Sigmoid colon (tissue), 7 donors: ENCODE measurements at regions of chr1 and their contacts with region 1.

Region 1: GRCh38 chr1:177780096-177780700 is 189.7 kb downstream of the SEC16B start:
- DNase-seq: no peak
- H3K4me3 ChIP-seq: no peak overlapping the region
- H3K27ac ChIP-seq: no peak overlapping the region
- H3K4me1 ChIP-seq: peaks cover 0 to 5% (median 0%) of the 10 kb centered on the region in 4 donors
- H3K27me3 ChIP-seq: no peaks in the 10 kb centered on the region
- CTCF ChIP-seq: peak in 3 of 4 experiments; percentile 30 to 47 (median 41)
- EP300 ChIP-seq: no peak
- POLR2A ChIP-seq: no peak

Region 2: DNA sequence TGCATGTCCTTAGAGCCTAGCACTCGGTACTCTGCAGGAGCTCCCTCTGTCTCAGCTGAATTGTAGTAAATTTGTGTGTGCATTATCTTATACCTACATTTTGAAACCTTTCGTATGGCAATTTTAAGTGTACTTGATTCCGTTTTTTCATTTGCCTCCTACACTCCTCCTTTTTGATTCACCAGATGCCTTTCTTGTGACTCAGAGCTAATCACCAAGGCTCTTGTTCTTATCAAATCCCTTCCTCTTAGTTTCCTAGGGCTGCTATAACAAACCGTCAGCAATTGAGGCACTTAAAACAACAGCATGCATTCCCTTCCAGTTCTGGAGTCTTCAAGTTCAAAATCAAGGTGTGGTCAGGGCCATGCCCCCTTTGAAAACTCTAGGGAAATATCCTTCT is 876.7 kb before region 1 on chr1:
- intact Hi-C with region 1: loop called (anchors 5 kb)
- DNase-seq: no peak
- H3K4me3 ChIP-seq: no peak overlapping the region
- H3K27ac ChIP-seq: no peak overlapping the region
- H3K4me1 ChIP-seq: no peaks in the 10 kb centered on the region
- H3K27me3 ChIP-seq: peaks cover 0 to 24% (median 0%) of the 10 kb centered on the region in 3 donors
- CTCF ChIP-seq: no peak
- EP300 ChIP-seq: no peak
- POLR2A ChIP-seq: no peak

Region 3: DNA sequence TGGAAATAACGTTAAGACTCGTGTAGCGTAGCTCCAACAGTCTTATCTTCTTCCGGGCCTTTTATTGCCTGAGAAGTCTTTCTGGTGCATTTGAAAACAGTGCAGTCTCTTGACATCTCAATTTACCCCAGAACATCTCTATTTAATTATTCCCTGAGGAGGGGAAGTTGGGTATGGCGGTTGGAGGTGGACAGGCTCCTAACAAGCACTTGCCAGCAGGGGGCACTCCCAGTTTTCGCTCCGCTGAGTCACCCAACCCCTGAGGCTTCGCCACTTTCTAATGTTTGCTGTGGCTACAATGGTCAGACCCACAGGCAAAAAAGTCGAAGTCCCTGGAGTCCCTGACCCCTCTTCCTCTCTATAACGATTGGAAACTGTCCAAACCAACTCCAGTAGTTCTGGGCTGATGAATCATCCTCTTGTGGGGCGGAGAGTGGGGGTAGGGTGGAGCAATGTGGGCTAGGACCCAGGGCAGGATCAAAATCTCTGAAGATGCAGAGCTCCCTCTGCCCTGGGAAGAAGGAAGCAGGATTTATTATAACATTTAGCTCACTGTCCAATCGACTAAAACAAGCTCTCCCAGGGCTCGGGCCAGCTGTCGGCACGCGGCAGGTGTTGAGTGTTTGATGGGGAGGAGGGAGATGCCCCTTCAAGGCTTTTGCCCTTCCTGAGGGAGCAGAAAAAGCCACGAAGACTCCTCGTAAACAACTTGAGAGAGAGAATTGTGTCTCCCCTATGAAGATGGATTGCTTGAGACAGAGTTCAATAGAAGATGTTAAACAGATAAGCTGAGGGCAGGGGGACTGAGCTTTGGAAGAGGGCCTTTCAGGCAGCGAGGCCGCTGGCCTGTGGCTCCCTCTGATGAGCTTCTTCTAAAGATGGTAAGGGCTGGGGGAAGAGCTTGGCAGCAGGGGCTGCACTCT is 523.8 kb before region 1 on chr1:
- intact Hi-C with region 1: loop called (anchors 2 kb)
- DNase-seq: peak; percentile 72
- H3K4me3 ChIP-seq: no peak overlapping the region
- H3K27ac ChIP-seq: no peak overlapping the region
- H3K4me1 ChIP-seq: peaks cover 0 to 16% (median 10%) of the 10 kb centered on the region in 4 donors
- H3K27me3 ChIP-seq: no peaks in the 10 kb centered on the region
- CTCF ChIP-seq: peak in 3 of 4 experiments; percentile 43 to 65 (median 55)
- EP300 ChIP-seq: no peak
- POLR2A ChIP-seq: no peak

Region 4: GRCh38 chr1:177753655-177754054 is 26.5 kb before region 1 on chr1:
- intact Hi-C with region 1: no loop called
- DNase-seq: no peak
- H3K4me3 ChIP-seq: no peak overlapping the region
- H3K27ac ChIP-seq: no peak overlapping the region
- H3K4me1 ChIP-seq: no peaks in the 10 kb centered on the region
- H3K27me3 ChIP-seq: no peaks in the 10 kb centered on the region
- CTCF ChIP-seq: no peak
- EP300 ChIP-seq: no peak
- POLR2A ChIP-seq: no peak

Region 5: DNA sequence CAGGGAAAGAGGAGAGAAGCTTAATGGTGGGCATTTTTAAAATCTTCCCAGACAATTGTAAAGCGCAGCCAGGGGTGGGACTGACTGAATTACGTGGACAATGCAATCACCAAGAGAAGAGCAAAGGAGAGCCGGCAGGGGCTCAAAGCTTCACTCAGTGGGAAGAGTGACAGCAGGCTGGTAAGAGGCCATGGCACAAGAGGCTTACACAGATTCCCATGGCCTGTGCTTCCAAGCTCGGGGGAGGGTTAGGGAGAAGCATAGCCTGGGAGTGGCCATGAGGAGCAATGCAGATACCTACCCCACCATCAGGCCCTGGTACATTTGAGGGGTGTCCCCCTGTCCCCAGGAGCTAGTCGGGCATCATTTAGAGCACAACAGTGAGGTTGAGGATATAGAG is 216.8 kb after region 1 on chr1:
- intact Hi-C with region 1: no loop called
- DNase-seq: no peak
- H3K4me3 ChIP-seq: no peak overlapping the region
- H3K27ac ChIP-seq: no peak overlapping the region
- H3K4me1 ChIP-seq: no peaks in the 10 kb centered on the region
- H3K27me3 ChIP-seq: no peaks in the 10 kb centered on the region
- CTCF ChIP-seq: no peak
- EP300 ChIP-seq: no peak
- POLR2A ChIP-seq: no peak